IMR-90 (cell line): ENCODE measurements at regions of chr5 and their contacts with region 1.

Region 1: DNA sequence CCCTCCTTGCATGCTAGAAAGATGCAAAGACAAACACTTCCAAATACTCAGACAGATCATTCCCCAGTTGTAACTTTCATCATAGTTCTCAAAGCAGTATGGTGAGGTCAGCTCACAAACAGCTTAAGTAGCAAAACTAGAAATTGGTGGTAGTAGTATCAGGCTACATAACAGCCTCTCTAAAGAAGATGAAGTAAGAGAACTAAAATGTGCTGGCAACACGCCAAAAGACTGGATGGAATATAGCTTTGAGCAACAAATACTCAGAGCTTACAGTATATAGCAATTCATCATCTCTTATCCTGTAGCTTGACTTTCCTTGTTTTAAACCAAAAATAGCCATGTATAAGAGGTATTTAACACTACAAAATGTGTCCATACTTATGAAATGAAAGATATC is 7.5 kb downstream of the PFDN1 start:
- DNase-seq: peak; percentile 99
- ATAC-seq: peak; percentile 86
- H3K4me3 ChIP-seq: no peak overlapping the region
- H3K27ac ChIP-seq: no peak overlapping the region
- H3K4me1 ChIP-seq: peaks cover 11% of the 10 kb centered on the region
- H3K27me3 ChIP-seq: no peaks in the 10 kb centered on the region
- CTCF ChIP-seq: no peak
- POLR2A ChIP-seq: no peak
- RAD21 ChIP-seq: no peak

Region 2: DNA sequence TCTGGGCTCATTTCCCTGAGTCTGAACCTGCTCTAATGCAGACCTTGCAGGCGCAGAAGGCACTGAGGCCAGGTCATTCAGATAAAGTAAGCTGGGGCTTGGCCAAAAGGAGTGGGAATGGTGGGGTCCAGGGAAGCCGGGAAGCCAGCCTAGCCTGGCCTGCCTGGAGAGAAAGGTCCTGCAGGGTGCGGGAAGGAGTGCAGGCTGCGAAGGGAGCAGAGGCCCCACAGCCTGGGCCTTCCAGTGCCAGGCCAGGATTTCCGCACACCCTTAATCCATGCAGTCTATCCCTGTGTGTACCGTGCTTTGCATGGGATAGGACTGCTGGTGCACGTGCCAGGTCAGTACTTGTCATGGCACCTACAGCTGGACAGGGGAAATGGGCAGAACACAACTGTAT is 809.2 kb before region 1 on chr5:
- CTCF ChIA-PET with region 1: no interaction called
- POLR2A ChIA-PET with region 1: interaction called, 11 read pairs
- dilution Hi-C with region 1: no loop called
- in situ Hi-C with region 1: no loop called
- intact Hi-C with region 1: no loop called
- DNase-seq: no peak
- ATAC-seq: no peak
- H3K4me3 ChIP-seq: no peak overlapping the region
- H3K27ac ChIP-seq: no peak overlapping the region
- H3K4me1 ChIP-seq: peaks cover 10% of the 10 kb centered on the region
- H3K27me3 ChIP-seq: no peaks in the 10 kb centered on the region
- CTCF ChIP-seq: no peak
- POLR2A ChIP-seq: no peak
- RAD21 ChIP-seq: no peak

Region 3: DNA sequence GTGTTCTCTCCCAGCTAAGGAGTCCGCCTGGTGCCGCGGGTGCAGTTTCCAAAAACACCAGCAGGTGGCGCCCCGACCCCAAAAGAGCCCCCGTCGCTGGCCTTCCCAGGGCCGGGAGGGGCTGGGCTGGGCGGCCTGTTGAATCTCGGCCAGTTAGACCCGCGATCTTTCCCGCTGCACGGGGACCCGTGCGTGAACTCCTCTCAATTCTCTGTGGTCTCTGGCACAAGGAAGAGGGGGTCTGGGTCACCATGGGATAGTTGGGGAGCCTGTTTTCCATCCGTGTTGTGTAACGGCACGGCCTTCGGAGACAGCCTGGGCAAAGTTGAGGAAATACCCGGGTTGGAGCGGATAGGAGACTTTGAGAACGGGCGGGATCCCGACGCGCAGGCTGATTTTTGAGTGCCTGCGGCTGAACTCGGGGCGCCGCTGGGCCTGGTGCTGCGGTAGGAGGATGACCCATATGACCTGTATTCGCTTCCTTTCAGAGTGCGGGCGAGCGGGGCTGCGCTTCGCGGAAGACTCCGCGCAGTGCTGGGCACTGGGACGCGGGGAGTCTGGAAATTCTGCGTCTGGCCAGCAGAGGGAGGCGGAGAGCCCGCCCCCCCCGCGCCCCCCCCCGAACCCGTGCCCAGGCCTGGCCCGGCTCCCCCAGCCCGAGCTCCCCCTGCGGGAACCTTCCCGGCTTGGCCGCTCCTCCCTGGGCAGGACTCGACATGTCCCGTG is 507.7 kb before region 1 on chr5:
- CTCF ChIA-PET with region 1: no interaction called
- POLR2A ChIA-PET with region 1: no interaction called
- dilution Hi-C with region 1: no loop called
- in situ Hi-C with region 1: no loop called
- intact Hi-C with region 1: no loop called
- DNase-seq: peak; percentile 52
- ATAC-seq: peak; percentile 94
- H3K4me3 ChIP-seq: peak overlapping the region; percentile 57
- H3K27ac ChIP-seq: no peak overlapping the region
- H3K4me1 ChIP-seq: no peaks in the 10 kb centered on the region
- H3K27me3 ChIP-seq: peaks cover 33% of the 10 kb centered on the region
- CTCF ChIP-seq: peak; percentile 99
- POLR2A ChIP-seq: no peak
- RAD21 ChIP-seq: peak; percentile 94

Region 4: DNA sequence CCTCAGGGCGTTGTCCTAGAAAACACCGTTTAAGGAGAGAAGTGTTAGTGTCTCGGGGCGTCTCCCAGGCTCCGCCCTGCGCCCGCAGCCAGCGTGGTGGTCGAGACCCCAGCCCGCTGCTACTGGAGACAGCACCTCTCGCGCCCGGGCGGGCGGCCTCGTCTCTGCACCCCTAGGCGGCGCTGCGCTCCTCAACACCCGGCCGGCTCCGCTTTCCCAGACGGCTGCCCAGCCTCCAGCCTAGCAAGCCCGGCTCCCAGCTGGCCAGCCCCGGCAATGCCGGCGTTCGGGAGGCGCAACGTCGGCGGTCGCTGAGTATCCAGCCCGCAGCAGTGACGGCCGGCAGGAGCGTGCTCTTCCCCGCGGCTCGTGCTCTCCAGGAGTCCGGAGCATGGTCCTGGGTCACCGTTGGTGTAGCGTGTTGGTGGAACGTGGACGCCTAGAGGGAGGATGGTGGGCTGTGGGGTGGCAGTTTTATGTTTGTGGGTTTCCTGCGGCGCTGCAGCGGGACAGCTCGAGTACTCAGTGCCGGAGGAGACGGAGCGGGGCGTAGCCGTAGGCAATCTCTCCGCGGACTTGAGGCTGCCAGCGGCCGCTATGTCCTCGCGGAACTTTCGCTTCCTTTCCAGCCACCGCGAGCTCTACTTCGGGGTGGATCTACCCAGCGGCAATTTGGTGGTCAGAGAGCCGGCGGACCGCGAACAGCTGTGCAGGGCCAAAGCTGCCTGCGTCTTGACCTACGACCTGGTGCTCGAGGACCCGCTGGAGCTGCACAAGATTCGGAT is 631.2 kb after region 1 on chr5:
- CTCF ChIA-PET with region 1: no interaction called
- POLR2A ChIA-PET with region 1: no interaction called
- dilution Hi-C with region 1: no loop called
- in situ Hi-C with region 1: no loop called
- intact Hi-C with region 1: no loop called
- DNase-seq: no peak
- ATAC-seq: no peak
- H3K4me3 ChIP-seq: peak overlapping the region; percentile 21; the same call in 1 of the 2 replicates
- H3K27ac ChIP-seq: no peak overlapping the region
- H3K4me1 ChIP-seq: no peaks in the 10 kb centered on the region
- H3K27me3 ChIP-seq: no peaks in the 10 kb centered on the region
- CTCF ChIP-seq: 0 out of 2 replicates have a peak, but pooled peaks have one; percentile 26
- POLR2A ChIP-seq: no peak
- RAD21 ChIP-seq: no peak